ENCODE measurements at regions of chr11 and their contacts with region 1.

Region 1: GRCh38 chr11:34357701-34358257 is at the start of gene ABTB2:
- DNase-seq: peak; percentile 99
- ATAC-seq: peak; percentile 95
- total RNA-seq, gene ABTB2: 14.3 TPM

Region 2: GRCh38 chr11:33857933-33858371 is 499.8 kb before region 1 on chr11:
- intact Hi-C with region 1: loop called (anchors 10 kb)
- DNase-seq: peak; percentile 88
- ATAC-seq: peak; percentile 88

Region 3: DNA sequence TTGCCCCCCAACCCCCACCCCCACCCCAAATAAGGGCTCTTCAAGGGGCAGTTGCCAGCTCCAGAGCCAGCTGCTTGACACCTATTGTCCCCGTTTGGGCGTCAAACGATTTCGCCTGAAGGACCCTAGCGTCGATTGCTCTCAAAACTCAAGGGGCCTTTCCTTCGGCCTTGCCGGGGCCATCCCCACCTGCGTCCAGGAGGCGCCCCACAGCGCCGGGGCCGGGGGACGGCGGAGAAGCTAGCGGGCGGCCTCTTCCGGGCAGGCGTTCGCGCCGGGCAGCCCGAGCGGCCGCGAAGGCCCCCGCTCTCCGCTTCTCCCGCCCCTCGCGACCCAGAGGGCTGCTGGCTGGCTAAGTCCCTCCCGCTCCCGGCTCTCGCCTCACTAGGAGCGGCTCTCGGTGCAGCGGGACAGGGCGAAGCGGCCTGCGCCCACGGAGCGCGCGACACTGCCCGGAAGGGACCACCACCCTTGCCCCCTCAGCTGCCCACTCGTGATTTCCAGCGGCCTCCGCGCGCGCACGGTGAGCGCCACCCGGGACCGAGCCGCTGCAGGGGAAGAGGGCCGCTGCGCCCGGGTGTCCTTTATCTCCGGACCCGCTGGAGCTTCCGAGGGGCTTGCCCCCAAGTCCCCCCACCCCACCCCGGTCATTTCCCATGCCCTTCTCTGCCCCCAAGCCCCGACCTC is 306.3 kb before region 1 on chr11 and contains the start of gene CAPRIN1:
- intact Hi-C with region 1: loop called (anchors 5 kb)
- DNase-seq: peak; percentile 94
- ATAC-seq: peak; percentile 94
- total RNA-seq, gene CAPRIN1: 120 TPM

Region 4: GRCh38 chr11:34174412-34175041 is 183.3 kb before region 1 on chr11:
- intact Hi-C with region 1: loop called (anchors 1 kb)
- DNase-seq: peak; percentile 93
- ATAC-seq: peak; percentile 99

Region 5: GRCh38 chr11:34313099-34313517 is 44.7 kb before region 1 on chr11:
- intact Hi-C with region 1: loop called (anchors 2 kb)
- DNase-seq: no peak
- ATAC-seq: no peak

Region 6: DNA sequence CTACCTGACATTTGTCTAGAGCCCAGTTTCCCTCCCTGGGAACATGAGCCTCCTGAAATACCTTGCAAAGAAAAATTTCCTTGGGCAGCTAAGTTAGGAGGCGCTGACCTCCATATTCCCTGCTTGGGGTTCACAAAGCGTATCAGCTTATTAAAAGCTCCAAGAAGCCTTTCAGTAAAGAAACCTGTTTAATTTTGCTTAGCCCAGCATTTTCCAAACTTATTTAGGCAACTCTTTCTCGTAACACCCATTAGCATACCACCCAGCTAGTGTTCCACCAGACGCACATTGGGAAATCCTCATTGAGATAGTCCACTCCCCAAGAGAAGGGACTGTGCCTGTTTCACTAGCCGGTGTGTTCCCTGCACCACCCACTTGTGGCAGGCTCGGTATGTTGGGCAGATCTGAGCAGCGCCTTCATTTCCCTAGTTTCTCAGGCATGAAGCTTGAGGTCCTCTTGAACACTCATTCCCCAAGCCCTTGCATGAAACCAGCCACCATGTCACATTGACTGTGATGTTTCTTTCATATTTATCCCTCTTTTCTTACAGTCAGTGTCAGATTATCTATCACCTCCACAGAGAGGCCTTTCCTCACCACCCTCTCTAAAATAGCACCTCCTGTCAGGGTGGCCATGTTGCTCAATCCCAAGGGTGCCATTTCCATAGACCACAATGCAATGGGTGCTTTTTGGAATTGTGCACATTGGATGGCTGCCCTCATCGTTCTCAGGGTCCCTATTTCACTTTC is 168.3 kb after region 1 on chr11:
- intact Hi-C with region 1: no loop called
- DNase-seq: no peak
- ATAC-seq: no peak